Activated CD8-positive, alpha-beta T cell treated with anti-CD3 and anti-CD28 coated beads for 36 hours (primary cell): ENCODE measurements at regions of chr3 and their contacts with region 1.

Region 1: GRCh38 chr3:98039322-98040024 is 4.4 kb upstream of the GABRR3 start:
- DNase-seq: peak; percentile 90
- ATAC-seq: peak; percentile 96
- H3K4me3 Mint-ChIP-seq: peak overlapping the region; percentile 73
- H3K27ac Mint-ChIP-seq: peak overlapping the region; percentile 90
- H3K4me1 Mint-ChIP-seq: peaks cover 9% of the 10 kb centered on the region
- H3K27me3 Mint-ChIP-seq: peaks cover 17% of the 10 kb centered on the region
- CTCF ChIP-seq: peak; percentile 98

Region 2: GRCh38 chr3:98008855-98009254 is 30.6 kb before region 1 on chr3:
- CTCF ChIA-PET with region 1: no interaction called
- POLR2A ChIA-PET with region 1: no interaction called
- intact Hi-C with region 1: no loop called
- DNase-seq: no peak
- ATAC-seq: no peak
- H3K4me3 Mint-ChIP-seq: no peak overlapping the region
- H3K27ac Mint-ChIP-seq: no peak overlapping the region
- H3K4me1 Mint-ChIP-seq: no peaks in the 10 kb centered on the region
- H3K27me3 Mint-ChIP-seq: peaks cover 9% of the 10 kb centered on the region
- CTCF ChIP-seq: no peak

Region 3: GRCh38 chr3:98022978-98023820 is 16.3 kb before region 1 on chr3:
- CTCF ChIA-PET with region 1: interaction called, 27 read pairs
- POLR2A ChIA-PET with region 1: no interaction called
- intact Hi-C with region 1: no loop called
- DNase-seq: peak; percentile 96
- ATAC-seq: peak; percentile 89
- H3K4me3 Mint-ChIP-seq: no peak overlapping the region
- H3K27ac Mint-ChIP-seq: no peak overlapping the region
- H3K4me1 Mint-ChIP-seq: peaks cover 1% of the 10 kb centered on the region
- H3K27me3 Mint-ChIP-seq: peaks cover 3% of the 10 kb centered on the region
- CTCF ChIP-seq: peak; percentile 91

Region 4: GRCh38 chr3:98171066-98171465 is 131.6 kb after region 1 on chr3:
- CTCF ChIA-PET with region 1: no interaction called
- POLR2A ChIA-PET with region 1: no interaction called
- intact Hi-C with region 1: no loop called
- DNase-seq: no peak
- ATAC-seq: no peak
- H3K4me3 Mint-ChIP-seq: no peak overlapping the region
- H3K27ac Mint-ChIP-seq: no peak overlapping the region
- H3K4me1 Mint-ChIP-seq: no peaks in the 10 kb centered on the region
- H3K27me3 Mint-ChIP-seq: peaks cover 3% of the 10 kb centered on the region
- CTCF ChIP-seq: no peak

Region 5: DNA sequence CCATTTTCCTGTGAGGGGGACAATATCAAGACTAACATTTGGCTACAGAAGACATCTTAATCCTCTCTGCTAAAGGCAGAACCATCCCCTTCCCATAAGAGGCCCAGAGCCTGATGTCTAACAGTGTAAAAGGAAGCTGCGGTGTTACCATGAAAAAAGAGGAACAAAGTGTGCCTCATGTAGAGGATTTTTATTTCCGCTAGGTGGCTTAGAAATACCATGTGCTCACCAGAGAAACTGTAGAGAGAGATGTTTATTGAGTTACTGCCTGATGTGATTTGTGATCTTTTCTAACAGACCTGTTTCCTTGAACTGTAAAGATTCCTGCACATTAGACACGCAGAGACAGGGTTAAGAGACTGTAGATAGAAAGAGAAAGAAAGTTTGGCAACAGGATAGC is 149.1 kb after region 1 on chr3:
- CTCF ChIA-PET with region 1: no interaction called
- POLR2A ChIA-PET with region 1: no interaction called
- intact Hi-C with region 1: loop called (anchors 5 kb)
- DNase-seq: no peak
- ATAC-seq: no peak
- H3K4me3 Mint-ChIP-seq: no peak overlapping the region
- H3K27ac Mint-ChIP-seq: no peak overlapping the region
- H3K4me1 Mint-ChIP-seq: peaks cover 3% of the 10 kb centered on the region
- H3K27me3 Mint-ChIP-seq: peaks cover 2% of the 10 kb centered on the region
- CTCF ChIP-seq: no peak

Region 6: DNA sequence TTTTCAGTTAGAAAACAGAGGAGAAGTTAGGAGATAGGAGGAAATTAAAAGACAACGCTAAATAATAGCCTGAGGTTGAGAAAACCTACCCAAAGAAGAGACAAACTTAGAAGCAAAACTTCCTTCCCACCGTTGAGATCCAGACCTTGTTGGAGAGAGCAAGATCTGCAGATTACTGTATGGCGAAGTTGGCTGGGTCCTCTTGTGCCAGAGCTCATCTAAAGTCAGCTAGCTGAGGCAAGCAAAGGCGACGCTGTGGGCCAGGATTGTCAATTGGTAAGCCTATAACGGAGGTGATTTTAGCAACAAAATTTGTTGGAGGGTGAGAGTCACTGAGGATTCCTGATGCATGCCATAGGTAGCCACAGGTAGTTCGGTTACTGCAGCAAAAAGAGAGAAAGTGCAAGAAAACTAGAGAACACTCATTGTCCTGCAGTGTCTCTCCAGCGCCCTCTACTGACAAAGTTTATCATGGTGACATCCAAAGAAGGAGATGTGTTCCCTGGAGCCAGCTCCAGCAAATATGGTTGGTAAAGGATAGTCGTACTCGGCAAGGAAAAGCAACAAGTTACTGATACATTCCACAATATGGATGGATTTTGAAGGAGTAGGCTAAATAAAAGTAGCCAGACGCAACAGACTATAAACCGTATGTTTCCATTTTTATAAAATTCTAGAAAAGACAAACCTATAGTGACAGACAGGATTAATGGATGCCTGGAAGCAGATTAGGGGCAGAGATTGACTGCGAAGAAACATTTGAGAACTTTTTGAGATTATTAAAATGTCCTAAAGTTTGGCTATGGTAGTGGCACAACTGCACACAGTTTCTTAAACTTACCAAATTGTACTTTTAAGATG is 304.4 kb after region 1 on chr3:
- CTCF ChIA-PET with region 1: interaction called, 10 read pairs
- POLR2A ChIA-PET with region 1: no interaction called
- intact Hi-C with region 1: no loop called
- DNase-seq: peak; percentile 51
- ATAC-seq: peak; percentile 37
- H3K4me3 Mint-ChIP-seq: no peak overlapping the region
- H3K27ac Mint-ChIP-seq: no peak overlapping the region
- H3K4me1 Mint-ChIP-seq: no peaks in the 10 kb centered on the region
- H3K27me3 Mint-ChIP-seq: peaks cover 12% of the 10 kb centered on the region
- CTCF ChIP-seq: peak; percentile 77

Region 7: DNA sequence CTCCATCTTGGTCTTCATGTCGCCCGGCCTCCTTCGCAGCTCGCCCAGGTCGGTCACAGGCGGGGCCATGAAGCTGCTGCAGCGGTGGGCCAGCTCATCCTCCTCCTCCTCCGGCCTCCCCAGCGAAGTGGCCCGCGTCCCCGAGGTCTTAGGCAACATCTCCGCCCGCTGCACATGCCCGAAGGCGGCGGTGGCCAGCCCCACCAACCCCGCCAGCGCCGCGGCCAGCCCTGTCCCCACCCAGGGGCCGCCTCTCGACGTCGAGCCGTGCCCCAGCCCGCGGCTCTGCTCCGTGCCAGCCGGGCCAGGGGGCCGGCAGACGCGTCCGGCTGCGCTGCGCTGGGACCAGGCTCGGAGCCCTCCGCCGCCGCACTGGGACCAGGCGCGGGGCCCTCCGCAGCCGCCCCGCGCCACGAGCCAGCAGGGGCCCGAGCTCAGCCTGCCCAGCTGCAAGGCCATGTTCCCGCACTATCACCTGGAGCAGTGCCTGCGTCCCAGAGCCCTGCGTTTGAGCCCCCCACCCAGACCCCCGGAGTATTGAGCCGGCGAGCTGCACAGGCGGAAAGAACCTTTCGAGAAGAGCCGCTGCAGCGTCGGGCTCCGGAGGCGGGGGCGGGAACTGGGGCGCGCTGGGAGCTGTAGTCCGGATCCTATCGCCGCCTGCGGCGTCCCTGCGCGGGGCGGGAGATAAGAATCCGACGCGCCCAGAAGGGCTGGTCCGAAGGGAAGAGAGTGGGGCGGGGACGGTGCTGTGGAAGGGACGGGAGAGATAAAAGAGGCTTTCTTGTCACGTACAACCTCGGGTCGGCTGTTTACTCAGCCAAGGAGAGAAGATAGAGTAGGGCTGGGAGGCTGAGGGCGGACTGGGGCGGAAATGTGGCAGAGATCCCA is 553.8 kb after region 1 on chr3 and contains the start of gene CPOX:
- CTCF ChIA-PET with region 1: interaction called, 10 read pairs
- POLR2A ChIA-PET with region 1: no interaction called
- intact Hi-C with region 1: no loop called
- DNase-seq: peak; percentile 94
- ATAC-seq: peak; percentile 99
- H3K4me3 Mint-ChIP-seq: peak within 1 kb of the TSS; percentile 96
- H3K27ac Mint-ChIP-seq: peak within 1 kb of the TSS; percentile 96
- H3K4me1 Mint-ChIP-seq: peaks cover 41% of the 10 kb centered on the region
- H3K27me3 Mint-ChIP-seq: no peaks in the 10 kb centered on the region
- CTCF ChIP-seq: no peak
- total RNA-seq, gene CPOX: 40.5 to 45.3 TPM

Region 8: DNA sequence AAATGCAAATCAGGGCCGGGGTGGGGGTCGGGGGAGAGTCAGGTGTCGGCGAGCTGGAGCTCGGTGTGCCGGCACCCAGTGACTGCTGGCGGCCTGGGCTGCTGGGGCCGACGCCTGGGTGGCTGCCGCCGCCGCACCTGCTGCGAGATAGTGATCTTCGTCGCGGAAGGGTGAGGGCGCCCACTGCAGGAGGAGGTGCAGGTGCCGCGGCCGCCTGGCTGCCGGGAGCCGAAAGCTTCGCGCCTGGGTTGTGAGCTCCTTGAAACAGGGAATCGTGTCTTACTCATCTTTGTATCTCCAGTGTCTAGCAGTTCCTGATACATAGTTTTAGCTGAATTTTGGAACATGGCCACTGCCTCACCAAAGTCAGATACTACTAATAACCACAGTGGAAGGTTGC is 618.0 kb after region 1 on chr3:
- CTCF ChIA-PET with region 1: interaction called, 5 read pairs
- POLR2A ChIA-PET with region 1: no interaction called
- intact Hi-C with region 1: loop called (anchors 5 kb)
- DNase-seq: peak; percentile 65
- ATAC-seq: peak; percentile 74
- H3K4me3 Mint-ChIP-seq: no peak overlapping the region
- H3K27ac Mint-ChIP-seq: no peak overlapping the region
- H3K4me1 Mint-ChIP-seq: no peaks in the 10 kb centered on the region
- H3K27me3 Mint-ChIP-seq: peaks cover 15% of the 10 kb centered on the region
- CTCF ChIP-seq: no peak